Mammary epithelial cell (primary cell): ENCODE measurements at regions of chr5 and their contacts with region 1.

Region 1: DNA sequence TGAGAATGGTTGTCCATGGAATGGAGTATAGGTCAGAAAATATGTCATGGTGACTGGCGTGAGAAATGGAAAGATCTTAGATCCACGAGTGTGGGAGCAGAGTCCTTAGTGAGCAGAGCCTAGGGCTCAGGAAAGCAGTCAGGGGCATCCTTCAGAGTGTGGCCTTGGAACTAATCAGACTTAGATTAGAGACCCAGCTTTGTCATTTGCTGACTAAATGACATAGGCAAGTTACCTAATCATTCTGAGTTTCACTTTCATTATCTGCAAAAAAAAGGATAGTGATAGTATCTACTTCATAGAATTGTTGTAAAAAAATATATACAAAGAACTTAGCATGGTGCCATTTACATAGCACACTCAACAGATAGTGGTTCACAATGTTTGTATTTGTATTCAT is 24.3 kb upstream of the SLIT3 start:
- DNase-seq: no peak
- H3K4me3 ChIP-seq: no peak overlapping the region
- H3K27ac ChIP-seq: no peak overlapping the region
- H3K4me1 ChIP-seq: no peaks in the 10 kb centered on the region
- H3K27me3 ChIP-seq: no peaks in the 10 kb centered on the region
- CTCF ChIP-seq: no peak

Region 2: GRCh38 chr5:169286572-169287300 is 38.5 kb before region 1 on chr5:
- CTCF ChIA-PET with region 1: no interaction called
- dilution Hi-C with region 1: loop called (anchors 5 kb)
- in situ Hi-C with region 1: no loop called
- intact Hi-C with region 1: no loop called
- DNase-seq: no peak
- H3K4me3 ChIP-seq: no peak overlapping the region
- H3K27ac ChIP-seq: no peak overlapping the region
- H3K4me1 ChIP-seq: peaks cover 13% of the 10 kb centered on the region
- H3K27me3 ChIP-seq: no peaks in the 10 kb centered on the region
- CTCF ChIP-seq: no peak